Left cardiac atrium (tissue), 4 donors: ENCODE measurements at regions of chr5 and their contacts with region 1.

Region 1: DNA sequence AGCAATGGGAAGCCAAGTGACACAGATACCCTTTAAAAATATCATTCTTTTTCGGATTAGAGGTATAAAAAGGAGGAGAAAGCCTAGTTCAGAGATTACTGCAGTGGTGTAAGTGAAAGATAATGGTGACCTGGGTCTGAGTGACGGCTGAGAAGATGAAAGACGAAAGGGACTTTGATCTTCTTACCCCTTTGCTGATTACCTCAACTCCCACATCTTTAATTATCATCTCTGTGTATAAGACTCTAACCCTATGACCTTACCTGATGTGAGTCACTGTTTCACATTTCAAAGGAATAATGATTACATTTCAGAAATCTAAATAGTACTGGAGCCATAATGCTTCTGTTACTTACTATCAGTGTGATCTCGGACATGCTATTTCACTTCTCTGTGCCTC is 21.4 kb upstream of the CCNO start:
- DNase-seq: no peak
- ATAC-seq: no peak

Region 2: DNA sequence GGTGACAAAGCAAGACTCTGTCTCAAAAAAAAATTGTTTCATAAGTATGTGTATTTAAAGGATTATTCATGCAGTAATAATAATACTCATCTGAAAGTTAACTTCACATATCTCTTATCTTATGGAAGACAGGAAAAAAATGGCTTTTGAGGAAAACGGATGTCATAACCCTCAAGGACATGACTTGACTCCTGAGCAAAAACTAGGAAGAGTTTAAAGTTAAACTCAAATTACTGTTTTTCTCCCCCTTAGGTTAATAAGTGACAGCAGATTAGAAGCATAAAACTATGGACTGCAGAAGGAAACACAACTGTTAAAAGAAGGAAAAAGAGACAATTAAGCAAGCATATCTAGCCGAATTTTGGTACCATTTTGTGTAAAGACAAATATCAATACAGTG is 36.2 kb after region 1 on chr5:
- intact Hi-C with region 1: loop called in 1 of 2 experiments (anchors 5 kb)
- DNase-seq: no peak
- ATAC-seq: no peak

Region 3: GRCh38 chr5:56088967-56089829 is 834.4 kb after region 1 on chr5:
- intact Hi-C with region 1: no loop called
- DNase-seq: no peak
- ATAC-seq: peak; percentile 53 to 87